ENCODE measurements at regions of chr1 and their contacts with region 1.

Region 1: DNA sequence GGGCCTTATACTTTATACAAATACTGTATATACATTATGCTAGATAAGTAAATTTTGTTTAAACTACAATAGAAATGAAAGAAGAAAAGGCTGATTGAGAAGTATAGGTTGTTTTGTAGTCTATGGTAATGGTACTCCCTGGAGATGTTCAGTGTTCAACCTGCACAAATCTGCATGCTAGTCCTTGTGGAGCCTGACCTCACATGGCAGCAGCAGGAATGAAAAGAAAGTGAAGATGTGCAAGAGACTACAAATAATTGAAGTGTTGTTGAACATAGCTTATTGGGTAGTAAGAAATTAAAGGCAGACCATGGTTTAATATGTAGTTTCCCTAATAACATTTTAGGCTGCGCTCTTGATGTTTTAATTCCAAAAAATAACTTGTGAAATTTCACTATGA is 201.2 kb downstream of the TGFB2 start:
- DNase-seq: peak; percentile 24
- H3K4me3 Mint-ChIP-seq: no peak overlapping the region
- H3K27ac Mint-ChIP-seq: peak overlapping the region; percentile 0
- H3K4me1 Mint-ChIP-seq: peaks cover 38% of the 10 kb centered on the region
- H3K27me3 Mint-ChIP-seq: no peaks in the 10 kb centered on the region
- CTCF ChIP-seq: no peak

Region 2: GRCh38 chr1:218135371-218135770 is 410.9 kb before region 1 on chr1:
- CTCF ChIA-PET with region 1: no interaction called
- intact Hi-C with region 1: no loop called
- DNase-seq: no peak
- H3K4me3 Mint-ChIP-seq: no peak overlapping the region
- H3K27ac Mint-ChIP-seq: no peak overlapping the region
- H3K4me1 Mint-ChIP-seq: no peaks in the 10 kb centered on the region
- H3K27me3 Mint-ChIP-seq: no peaks in the 10 kb centered on the region
- CTCF ChIP-seq: no peak

Region 3: DNA sequence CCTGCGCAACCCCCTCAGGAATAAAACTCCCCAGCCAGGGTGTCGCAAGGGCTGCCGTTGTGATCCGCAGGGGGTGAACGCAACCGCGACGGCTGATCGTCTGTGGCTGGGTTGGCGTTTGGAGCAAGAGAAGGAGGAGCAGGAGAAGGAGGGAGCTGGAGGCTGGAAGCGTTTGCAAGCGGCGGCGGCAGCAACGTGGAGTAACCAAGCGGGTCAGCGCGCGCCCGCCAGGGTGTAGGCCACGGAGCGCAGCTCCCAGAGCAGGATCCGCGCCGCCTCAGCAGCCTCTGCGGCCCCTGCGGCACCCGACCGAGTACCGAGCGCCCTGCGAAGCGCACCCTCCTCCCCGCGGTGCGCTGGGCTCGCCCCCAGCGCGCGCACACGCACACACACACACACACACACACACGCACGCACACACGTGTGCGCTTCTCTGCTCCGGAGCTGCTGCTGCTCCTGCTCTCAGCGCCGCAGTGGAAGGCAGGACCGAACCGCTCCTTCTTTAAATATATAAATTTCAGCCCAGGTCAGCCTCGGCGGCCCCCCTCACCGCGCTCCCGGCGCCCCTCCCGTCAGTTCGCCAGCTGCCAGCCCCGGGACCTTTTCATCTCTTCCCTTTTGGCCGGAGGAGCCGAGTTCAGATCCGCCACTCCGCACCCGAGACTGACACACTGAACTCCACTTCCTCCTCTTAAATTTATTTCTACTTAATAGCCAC is 200.5 kb before region 1 on chr1:
- CTCF ChIA-PET with region 1: interaction called, 6 read pairs
- intact Hi-C with region 1: loop called (anchors 2 kb)
- DNase-seq: peak; percentile 70
- H3K4me3 Mint-ChIP-seq: no peak overlapping the region
- H3K27ac Mint-ChIP-seq: no peak overlapping the region
- H3K4me1 Mint-ChIP-seq: peaks cover 19% of the 10 kb centered on the region
- H3K27me3 Mint-ChIP-seq: no peaks in the 10 kb centered on the region
- CTCF ChIP-seq: no peak

Region 4: GRCh38 chr1:218397752-218398339 is 148.5 kb before region 1 on chr1:
- CTCF ChIA-PET with region 1: interaction called, 9 read pairs
- intact Hi-C with region 1: loop called (anchors 5 kb)
- DNase-seq: peak; percentile 82
- H3K4me3 Mint-ChIP-seq: peak overlapping the region; percentile 26
- H3K27ac Mint-ChIP-seq: peak overlapping the region; percentile 71
- H3K4me1 Mint-ChIP-seq: peaks cover 40% of the 10 kb centered on the region
- H3K27me3 Mint-ChIP-seq: no peaks in the 10 kb centered on the region
- CTCF ChIP-seq: no peak

Region 5: GRCh38 chr1:218499011-218499691 is 47.2 kb before region 1 on chr1:
- CTCF ChIA-PET with region 1: no interaction called
- intact Hi-C with region 1: loop called (anchors 5 kb)
- DNase-seq: no peak
- H3K4me3 Mint-ChIP-seq: peak overlapping the region; percentile 62
- H3K27ac Mint-ChIP-seq: peak overlapping the region; percentile 95
- H3K4me1 Mint-ChIP-seq: peaks cover 45% of the 10 kb centered on the region
- H3K27me3 Mint-ChIP-seq: no peaks in the 10 kb centered on the region
- CTCF ChIP-seq: no peak

Region 6: DNA sequence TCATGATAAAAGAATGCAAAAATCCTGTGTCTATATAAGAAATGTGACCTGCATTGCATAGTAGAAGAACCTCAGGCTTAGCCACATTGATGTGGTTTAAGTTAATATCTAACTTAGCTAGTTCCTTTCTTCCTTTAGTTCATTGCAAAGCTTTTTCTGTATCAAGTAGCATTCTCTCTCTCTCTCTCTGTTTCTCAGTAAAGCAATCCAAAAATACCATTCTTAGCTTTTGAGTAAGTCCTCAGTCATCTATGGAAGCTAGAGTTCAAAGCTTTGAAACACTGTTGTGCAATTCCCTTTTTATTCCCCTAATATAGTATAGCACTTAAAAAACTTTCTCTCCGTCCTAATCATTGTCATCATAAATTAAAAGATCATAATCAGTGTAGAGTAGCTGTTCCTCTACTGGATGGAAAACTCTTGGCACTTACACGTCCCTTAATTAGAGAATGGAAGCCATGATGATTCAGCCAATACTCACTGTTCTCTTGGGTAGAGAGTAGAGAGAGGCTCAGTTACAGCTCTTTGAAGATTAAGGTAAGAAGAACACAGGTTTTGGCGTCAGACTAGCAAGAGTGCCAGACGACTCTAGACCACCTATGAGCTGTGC is 277.1 kb after region 1 on chr1:
- CTCF ChIA-PET with region 1: interaction called, 4 read pairs
- intact Hi-C with region 1: loop called (anchors 2 kb)
- DNase-seq: peak; percentile 19
- H3K4me3 Mint-ChIP-seq: no peak overlapping the region
- H3K27ac Mint-ChIP-seq: peak overlapping the region; percentile 77
- H3K4me1 Mint-ChIP-seq: peaks cover 57% of the 10 kb centered on the region
- H3K27me3 Mint-ChIP-seq: no peaks in the 10 kb centered on the region
- CTCF ChIP-seq: no peak

Region 7: DNA sequence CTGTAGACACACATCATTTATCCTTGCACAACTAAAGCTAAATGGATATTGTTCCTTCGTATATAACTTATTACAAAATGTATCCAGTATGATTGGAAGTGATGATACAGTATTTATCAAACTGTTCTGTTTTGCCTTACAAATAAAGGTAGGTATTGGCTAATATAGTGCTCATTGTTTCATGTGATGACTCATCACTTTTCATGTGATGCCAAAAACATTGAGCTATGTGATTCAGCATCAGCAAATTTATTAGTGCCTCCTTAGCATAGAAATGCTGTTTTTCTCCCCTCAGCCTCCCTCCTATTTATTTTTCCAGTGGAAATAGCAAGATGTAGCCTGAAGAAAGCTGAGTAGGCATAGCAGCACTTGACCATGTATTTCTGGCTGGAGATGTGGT is 398.7 kb after region 1 on chr1:
- CTCF ChIA-PET with region 1: no interaction called
- intact Hi-C with region 1: loop called (anchors 5 kb)
- DNase-seq: no peak
- H3K4me3 Mint-ChIP-seq: no peak overlapping the region
- H3K27ac Mint-ChIP-seq: peak overlapping the region; percentile 66
- H3K4me1 Mint-ChIP-seq: peaks cover 51% of the 10 kb centered on the region
- H3K27me3 Mint-ChIP-seq: no peaks in the 10 kb centered on the region
- CTCF ChIP-seq: no peak